PC-9 (cell line): ENCODE measurements at regions of chr19 and their contacts with region 1.

Region 1: GRCh38 chr19:18542936-18543815 is at the start of gene FKBP8:
- DNase-seq: peak; percentile 73 to 91
- H3K4me3 ChIP-seq: peak within 1 kb of the TSS; percentile 86
- H3K27ac ChIP-seq: no peak within 1 kb of the TSS
- H3K4me1 ChIP-seq: peaks cover 10% of the 10 kb centered on the region; the same call in 1 of the 2 replicates
- H3K27me3 ChIP-seq: no peaks in the 10 kb centered on the region
- CTCF ChIP-seq: no peak
- total RNA-seq, gene FKBP8: 231 and 320 TPM in 2 replicates

Region 2: GRCh38 chr19:18291590-18292461 is 251.3 kb before region 1 on chr19:
- CTCF ChIA-PET with region 1: no interaction called
- POLR2A ChIA-PET with region 1: interaction called, 12 read pairs
- intact Hi-C with region 1: no loop called
- DNase-seq: peak; percentile 52 to 69
- H3K4me3 ChIP-seq: peak overlapping the region; percentile 62
- H3K27ac ChIP-seq: peak overlapping the region; percentile 58
- H3K4me1 ChIP-seq: peaks cover 13% of the 10 kb centered on the region
- H3K27me3 ChIP-seq: no peaks in the 10 kb centered on the region
- CTCF ChIP-seq: no peak

Region 3: GRCh38 chr19:18322759-18323460 is 220.3 kb before region 1 on chr19 and contains the start of gene LSM4:
- CTCF ChIA-PET with region 1: no interaction called
- POLR2A ChIA-PET with region 1: no interaction called
- intact Hi-C with region 1: no loop called
- DNase-seq: peak; percentile 97 to 99
- H3K4me3 ChIP-seq: peak within 1 kb of the TSS; percentile 76
- H3K27ac ChIP-seq: peak within 1 kb of the TSS; percentile 84
- H3K4me1 ChIP-seq: peaks cover 37% of the 10 kb centered on the region
- H3K27me3 ChIP-seq: no peaks in the 10 kb centered on the region
- CTCF ChIP-seq: no peak
- total RNA-seq, gene LSM4: 291 and 323 TPM in 2 replicates

Region 4: GRCh38 chr19:19170053-19170872 is 627.1 kb after region 1 on chr19 and contains the start of gene MEF2B:
- CTCF ChIA-PET with region 1: no interaction called
- POLR2A ChIA-PET with region 1: interaction called, 12 read pairs
- intact Hi-C with region 1: no loop called
- DNase-seq: peak; percentile 44 to 76
- H3K4me3 ChIP-seq: no peak within 1 kb of the TSS
- H3K27ac ChIP-seq: no peak within 1 kb of the TSS
- H3K4me1 ChIP-seq: peaks cover 9% of the 10 kb centered on the region
- H3K27me3 ChIP-seq: no peaks in the 10 kb centered on the region
- CTCF ChIP-seq: no peak
- total RNA-seq, gene MEF2B: 1.8 and 3.9 TPM in 2 replicates